ENCODE measurements at regions of chr10 and their contacts with region 1.

Region 1: GRCh38 chr10:59362144-59362958 is at the start of gene FAM13C:
- DNase-seq: peak; percentile 66 to 78
- ATAC-seq: peak; percentile 60 to 77
- H3K4me3 ChIP-seq: peak within 1 kb of the TSS; percentile 70 to 74 (median 72)
- H3K27ac ChIP-seq: peak within 1 kb of the TSS; percentile 89 to 96 (median 92)
- H3K4me1 ChIP-seq: peaks cover 40 to 49% of the 10 kb centered on the region in 2 donors
- H3K27me3 ChIP-seq: no peaks in the 10 kb centered on the region
- CTCF ChIP-seq: peak in 2 of 5 experiments; percentile 17 to 27
- POLR2A ChIP-seq: peak in 1 of 2 donors; percentile 61
- total RNA-seq, gene FAM13C: 6.0 to 125 (median 17.6) TPM

Region 2: DNA sequence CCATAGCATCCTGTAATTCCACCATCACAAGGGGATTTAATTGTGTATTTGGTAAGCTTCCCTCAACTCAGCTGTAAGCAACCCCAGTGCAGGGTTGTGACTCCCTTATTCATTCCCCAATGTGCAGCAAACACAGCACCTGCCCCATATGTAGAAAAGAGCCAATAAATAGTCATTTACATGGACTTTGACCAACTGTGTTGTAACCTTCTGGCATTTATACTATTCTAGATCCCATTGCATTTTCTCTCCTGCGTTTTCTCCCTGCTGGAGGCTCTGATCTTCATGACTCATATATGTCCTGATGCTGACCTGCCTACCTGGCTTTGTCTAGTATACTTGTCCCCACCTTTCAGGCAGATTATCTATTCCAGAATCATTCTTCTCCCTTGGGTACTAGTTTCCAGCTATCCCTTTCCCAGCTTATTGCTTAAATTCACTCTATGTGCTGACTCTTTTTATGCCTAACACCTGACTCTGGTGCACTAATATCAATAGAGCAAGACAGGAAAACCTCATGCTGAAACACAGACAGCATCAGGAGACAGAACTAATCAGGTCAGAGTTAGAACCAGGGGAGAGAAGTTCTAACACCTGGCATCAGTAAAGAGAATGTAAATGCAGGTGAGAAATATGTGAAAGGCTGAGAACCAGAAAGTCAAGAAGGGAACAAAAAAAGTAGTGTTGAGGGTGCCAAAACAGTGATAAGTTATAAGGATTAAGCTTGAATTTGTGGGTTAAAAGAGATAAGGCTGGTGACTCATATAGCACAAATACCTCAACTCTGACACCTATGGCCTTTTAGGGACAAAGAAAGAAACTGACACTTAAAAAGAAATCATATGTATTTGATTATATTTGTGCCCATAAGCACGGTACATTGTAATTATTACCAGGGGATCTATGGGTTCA is 1497.3 kb before region 1 on chr10:
- in situ Hi-C with region 1: no loop called
- intact Hi-C with region 1: no loop called
- DNase-seq: no peak
- ATAC-seq: no peak
- H3K4me3 ChIP-seq: no peak overlapping the region
- H3K27ac ChIP-seq: no peak overlapping the region
- H3K4me1 ChIP-seq: no peaks in the 10 kb centered on the region
- H3K27me3 ChIP-seq: no peaks in the 10 kb centered on the region
- CTCF ChIP-seq: no peak
- POLR2A ChIP-seq: no peak

Region 3: DNA sequence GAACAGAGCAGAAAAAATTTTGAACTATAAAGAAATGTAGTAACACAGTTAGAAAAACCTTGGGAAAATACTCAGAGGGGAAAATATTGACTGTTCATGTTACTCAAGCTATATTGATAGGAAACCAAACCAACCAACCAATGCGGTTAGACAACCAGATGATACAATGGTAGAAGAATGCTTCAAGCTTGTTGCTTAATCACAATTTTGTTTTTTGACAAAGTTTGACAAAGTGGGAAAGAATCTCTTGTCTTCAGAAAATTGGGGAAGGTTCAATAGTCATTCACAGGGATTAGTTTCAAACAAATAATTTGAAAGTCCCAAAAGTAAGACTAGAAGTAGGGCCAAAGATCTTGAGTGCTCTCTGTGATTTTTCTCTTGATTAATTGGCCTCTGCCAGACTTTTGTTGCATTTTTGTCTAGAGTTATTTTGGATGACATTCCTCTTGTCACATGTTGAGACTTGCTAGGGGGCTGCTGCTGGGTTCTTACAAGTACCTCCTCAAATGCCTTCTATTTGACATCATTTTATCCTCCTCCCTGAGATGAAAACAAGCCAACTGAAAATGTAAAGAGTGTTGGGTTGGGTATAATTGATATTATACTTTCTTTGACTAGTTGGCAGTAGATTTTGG is 419.0 kb before region 1 on chr10:
- in situ Hi-C with region 1: no loop called
- intact Hi-C with region 1: no loop called
- DNase-seq: no peak
- ATAC-seq: peak; percentile 33 to 36
- H3K4me3 ChIP-seq: no peak overlapping the region
- H3K27ac ChIP-seq: peak overlapping the region in 2 of 4 donors; percentile 38 to 56
- H3K4me1 ChIP-seq: no peaks in the 10 kb centered on the region
- H3K27me3 ChIP-seq: no peaks in the 10 kb centered on the region
- CTCF ChIP-seq: no peak
- POLR2A ChIP-seq: no peak

Region 4: GRCh38 chr10:59283456-59284091 is 78.8 kb before region 1 on chr10:
- in situ Hi-C with region 1: no loop called
- intact Hi-C with region 1: loop called (anchors 5 kb)
- DNase-seq: peak; percentile 71 to 73
- ATAC-seq: peak; percentile 59 to 67
- H3K4me3 ChIP-seq: peak overlapping the region in 1 of 4 donors; percentile 23
- H3K27ac ChIP-seq: peak overlapping the region; percentile 70 to 90 (median 76)
- H3K4me1 ChIP-seq: peaks cover 44 to 55% of the 10 kb centered on the region in 2 donors
- H3K27me3 ChIP-seq: no peaks in the 10 kb centered on the region
- CTCF ChIP-seq: no peak
- POLR2A ChIP-seq: peak in 1 of 2 donors; percentile 22

Region 5: DNA sequence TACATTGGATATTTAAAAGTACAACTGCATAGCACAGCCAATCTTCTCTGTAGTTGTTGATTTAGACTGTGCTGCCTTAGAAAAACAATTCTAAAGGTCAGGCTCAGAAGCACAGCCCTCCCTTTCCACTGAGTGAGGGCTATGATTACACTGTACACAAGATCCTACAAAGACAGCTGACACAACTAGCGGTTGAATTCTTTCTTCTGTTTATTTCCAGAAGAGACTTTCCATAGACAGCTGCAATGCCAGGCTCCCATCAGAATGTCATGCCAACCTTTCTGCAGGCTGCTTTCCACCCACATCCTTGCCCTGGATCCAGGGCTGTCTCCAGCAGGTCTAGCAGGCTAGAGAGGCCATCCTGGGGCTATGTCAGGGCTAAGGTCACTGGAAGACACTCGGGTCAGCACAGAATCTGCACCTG is 39.3 kb before region 1 on chr10:
- in situ Hi-C with region 1: no loop called
- intact Hi-C with region 1: loop called (anchors 5 kb)
- DNase-seq: peak; percentile 84 to 92
- ATAC-seq: peak; percentile 85 to 90
- H3K4me3 ChIP-seq: peak overlapping the region in 1 of 4 donors; percentile 16
- H3K27ac ChIP-seq: peak overlapping the region; percentile 81 to 95 (median 88)
- H3K4me1 ChIP-seq: peaks cover 51 to 61% of the 10 kb centered on the region in 2 donors
- H3K27me3 ChIP-seq: no peaks in the 10 kb centered on the region
- CTCF ChIP-seq: no peak
- POLR2A ChIP-seq: no peak

Measured in gastrocnemius medialis (tissue), 4 donors.